CD4-positive, alpha-beta T cell (primary cell): ENCODE measurements at regions of chr14 and their contacts with region 1.

Region 1: GRCh38 chr14:93991212-93991611 is 5.9 kb upstream of the CCDC197 start:
- DNase-seq: no peak
- ATAC-seq: no peak
- H3K4me3 ChIP-seq: no peak overlapping the region
- H3K4me3 Mint-ChIP-seq: no peak overlapping the region
- H3K27ac ChIP-seq: no peak overlapping the region
- H3K27ac Mint-ChIP-seq: no peak overlapping the region
- H3K4me1 ChIP-seq: no peaks in the 10 kb centered on the region
- H3K4me1 Mint-ChIP-seq: no peaks in the 10 kb centered on the region
- H3K27me3 ChIP-seq: no peaks in the 10 kb centered on the region
- H3K27me3 Mint-ChIP-seq: no peaks in the 10 kb centered on the region
- CTCF ChIP-seq: no peak

Region 2: DNA sequence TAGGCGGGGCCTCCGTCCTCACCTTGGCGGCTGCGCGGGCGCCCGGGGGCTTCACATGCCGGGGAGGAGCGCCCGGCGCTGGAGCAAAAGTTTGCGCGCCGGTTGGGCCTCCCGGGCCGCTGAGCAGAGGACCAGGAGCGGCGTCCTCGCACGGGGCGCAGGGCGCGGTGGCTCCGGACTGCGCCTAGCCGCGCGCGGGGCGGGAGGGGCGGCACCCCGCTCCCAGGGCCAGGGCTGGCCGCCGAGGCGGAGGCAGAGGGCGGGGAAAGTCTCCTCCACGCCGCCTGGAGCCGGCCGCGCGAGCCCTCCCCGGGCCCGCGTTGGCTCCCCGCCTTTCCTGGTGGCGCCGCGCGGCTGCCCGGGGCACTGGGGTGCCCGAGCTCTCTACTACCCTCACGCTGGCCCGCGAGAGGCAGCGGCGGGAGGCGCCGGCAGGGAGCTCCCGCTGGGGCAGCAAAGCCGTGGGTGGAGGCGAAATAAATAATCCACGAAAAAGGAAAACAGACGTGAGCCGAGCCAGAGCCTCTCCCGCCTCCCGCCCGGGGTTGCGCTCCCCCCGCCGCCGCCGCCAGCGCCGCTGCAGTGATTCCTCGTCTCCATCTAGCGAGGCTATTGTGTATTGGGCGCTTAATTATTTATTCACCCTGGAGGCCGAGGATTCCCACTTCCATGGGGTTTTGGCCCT is 202.5 kb before region 1 on chr14:
- CTCF ChIA-PET with region 1: no interaction called
- POLR2A ChIA-PET with region 1: no interaction called
- intact Hi-C with region 1: no loop called
- DNase-seq: no peak
- ATAC-seq: no peak
- H3K4me3 ChIP-seq: no peak overlapping the region
- H3K4me3 Mint-ChIP-seq: no peak overlapping the region
- H3K27ac ChIP-seq: no peak overlapping the region
- H3K27ac Mint-ChIP-seq: no peak overlapping the region
- H3K4me1 ChIP-seq: no peaks in the 10 kb centered on the region
- H3K4me1 Mint-ChIP-seq: no peaks in the 10 kb centered on the region
- H3K27me3 ChIP-seq: peaks cover 29 to 30% of the 10 kb centered on the region in 2 experiments
- H3K27me3 Mint-ChIP-seq: peaks cover 81% of the 10 kb centered on the region
- CTCF ChIP-seq: no peak

Region 3: GRCh38 chr14:93857500-93858283 is 133.5 kb before region 1 on chr14:
- CTCF ChIA-PET with region 1: no interaction called
- POLR2A ChIA-PET with region 1: no interaction called
- intact Hi-C with region 1: no loop called
- DNase-seq: no peak
- ATAC-seq: no peak
- H3K4me3 ChIP-seq: no peak overlapping the region
- H3K4me3 Mint-ChIP-seq: no peak overlapping the region
- H3K27ac ChIP-seq: no peak overlapping the region
- H3K27ac Mint-ChIP-seq: no peak overlapping the region
- H3K4me1 ChIP-seq: no peaks in the 10 kb centered on the region
- H3K4me1 Mint-ChIP-seq: no peaks in the 10 kb centered on the region
- H3K27me3 ChIP-seq: no peaks in the 10 kb centered on the region
- H3K27me3 Mint-ChIP-seq: peaks cover 51% of the 10 kb centered on the region
- CTCF ChIP-seq: no peak

Region 4: GRCh38 chr14:93892923-93893558 is 98.2 kb before region 1 on chr14:
- CTCF ChIA-PET with region 1: no interaction called
- POLR2A ChIA-PET with region 1: no interaction called
- intact Hi-C with region 1: no loop called
- DNase-seq: peak; percentile 44 to 78 (median 63)
- ATAC-seq: peak; percentile 61
- H3K4me3 ChIP-seq: no peak overlapping the region
- H3K4me3 Mint-ChIP-seq: no peak overlapping the region
- H3K27ac ChIP-seq: no peak overlapping the region
- H3K27ac Mint-ChIP-seq: no peak overlapping the region
- H3K4me1 ChIP-seq: peaks cover 3% of the 10 kb centered on the region
- H3K4me1 Mint-ChIP-seq: no peaks in the 10 kb centered on the region
- H3K27me3 ChIP-seq: peaks cover 0 to 22% of the 10 kb centered on the region in 2 experiments
- H3K27me3 Mint-ChIP-seq: peaks cover 30% of the 10 kb centered on the region
- CTCF ChIP-seq: peak; percentile 100

Region 5: GRCh38 chr14:93975791-93976476 is 15.3 kb before region 1 on chr14:
- CTCF ChIA-PET with region 1: interaction called, 4 read pairs
- POLR2A ChIA-PET with region 1: interaction called, 11 read pairs
- intact Hi-C with region 1: no loop called
- DNase-seq: peak in 2 of 14 experiments; percentile 48 to 52
- ATAC-seq: no peak
- H3K4me3 ChIP-seq: peak overlapping the region; percentile 17
- H3K4me3 Mint-ChIP-seq: peak overlapping the region; percentile 8
- H3K27ac ChIP-seq: no peak overlapping the region
- H3K27ac Mint-ChIP-seq: peak overlapping the region; percentile 66
- H3K4me1 ChIP-seq: peaks cover 88% of the 10 kb centered on the region
- H3K4me1 Mint-ChIP-seq: peaks cover 67% of the 10 kb centered on the region
- H3K27me3 ChIP-seq: no peaks in the 10 kb centered on the region
- H3K27me3 Mint-ChIP-seq: no peaks in the 10 kb centered on the region
- CTCF ChIP-seq: no peak